Activated T-helper 1 cell treated with anti-CD3 and anti-CD28 coated beads, Interleukin-12 subunit alpha, Interleukin-12 subunit beta, Interleukin-2, Interleukin-4 antibody, amounts not matched to agents 30 ng/mL and 10 ng/mL and 1 ng/mL, durations not matched to agents 14 hours and 24 hours and 36 hours (primary cell): ENCODE measurements at regions of chr17 and their contacts with region 1.

Region 1: GRCh38 chr17:27293898-27294688 is at the start of gene WSB1:
- DNase-seq: peak; percentile 89
- H3K4me3 Mint-ChIP-seq: peak within 1 kb of the TSS; percentile 97
- H3K27ac Mint-ChIP-seq: peak within 1 kb of the TSS; percentile 98
- H3K4me1 Mint-ChIP-seq: peaks cover 37% of the 10 kb centered on the region
- H3K27me3 Mint-ChIP-seq: no peaks in the 10 kb centered on the region
- total RNA-seq, gene WSB1: 90.3 and 102 TPM in 2 replicates

Region 2: GRCh38 chr17:27332485-27333409 is 38.7 kb after region 1 on chr17:
- intact Hi-C with region 1: loop called (anchors 1 kb)
- DNase-seq: peak; percentile 81
- H3K4me3 Mint-ChIP-seq: peak overlapping the region; percentile 77
- H3K27ac Mint-ChIP-seq: peak overlapping the region; percentile 95
- H3K4me1 Mint-ChIP-seq: peaks cover 20% of the 10 kb centered on the region
- H3K27me3 Mint-ChIP-seq: peaks cover 3% of the 10 kb centered on the region

Region 3: GRCh38 chr17:27466743-27467375 is 172.8 kb after region 1 on chr17:
- intact Hi-C with region 1: loop called (anchors 2 kb)
- DNase-seq: peak; percentile 74
- H3K4me3 Mint-ChIP-seq: peak overlapping the region; percentile 79
- H3K27ac Mint-ChIP-seq: peak overlapping the region; percentile 97
- H3K4me1 Mint-ChIP-seq: peaks cover 88% of the 10 kb centered on the region
- H3K27me3 Mint-ChIP-seq: no peaks in the 10 kb centered on the region